ENCODE measurements at regions of chr1 and their contacts with region 1.

Region 1: GRCh38 chr1:18926315-18927081 is 24.1 kb upstream of the ALDH4A1 start:
- DNase-seq: peak; percentile 46 to 90 (median 75)
- ATAC-seq: peak; percentile 79
- H3K4me3 Mint-ChIP-seq: peak overlapping the region; percentile 69 to 93 (median 85)
- H3K27ac Mint-ChIP-seq: peak overlapping the region; percentile 85 to 98 (median 96)
- H3K4me1 Mint-ChIP-seq: peaks cover 34 to 93% (median 86%) of the 10 kb centered on the region in 4 donors
- H3K27me3 Mint-ChIP-seq: no peaks in the 10 kb centered on the region

Region 2: DNA sequence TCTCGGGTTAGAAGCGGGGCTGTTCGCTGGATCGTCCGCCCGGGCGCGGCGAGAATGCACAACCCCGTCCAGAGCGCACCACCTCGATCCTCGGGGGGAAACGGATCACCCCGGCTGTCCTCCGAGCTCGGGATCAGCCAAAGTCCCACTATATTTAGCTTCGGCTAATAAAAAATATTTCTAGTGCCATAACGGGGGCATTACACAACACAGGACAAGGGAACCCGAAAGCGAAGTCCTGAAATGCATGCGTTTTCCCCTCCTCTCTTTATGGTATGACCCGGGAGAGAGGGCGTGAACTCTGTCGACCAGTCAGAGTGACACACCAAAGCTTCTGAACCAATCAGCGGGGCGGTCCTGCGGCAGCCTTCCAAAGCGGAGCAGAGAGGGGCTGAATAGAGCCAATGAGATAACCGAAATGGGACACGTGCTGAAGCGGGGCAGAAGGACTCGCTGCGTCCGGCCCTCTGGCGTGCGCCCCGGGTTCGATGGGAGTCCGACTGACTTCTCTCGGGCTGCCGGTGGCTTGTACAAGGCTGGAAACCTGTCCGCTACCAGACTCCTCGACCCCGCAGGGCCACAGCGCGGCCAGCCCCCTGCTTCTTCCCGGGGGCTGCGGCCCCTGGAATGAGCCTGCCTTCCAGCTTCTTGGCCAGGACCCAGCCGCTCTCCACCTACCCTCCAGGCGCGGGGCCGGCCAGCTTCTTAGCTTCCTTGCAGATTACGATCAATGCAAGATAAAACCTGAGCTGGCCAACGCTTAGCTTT is 23.8 kb before region 1 on chr1 and contains the start of gene ALDH4A1:
- POLR2A ChIA-PET with region 1: interaction called, 11 read pairs
- DNase-seq: peak; percentile 77 to 97 (median 92)
- ATAC-seq: peak; percentile 96 to 98
- H3K4me3 Mint-ChIP-seq: peak within 1 kb of the TSS; percentile 88 to 95 (median 92)
- H3K27ac Mint-ChIP-seq: peak within 1 kb of the TSS; percentile 82 to 99 (median 98)
- H3K4me1 Mint-ChIP-seq: peaks cover 15 to 58% (median 37%) of the 10 kb centered on the region in 4 donors
- H3K27me3 Mint-ChIP-seq: no peaks in the 10 kb centered on the region
- polyA plus RNA-seq, gene ALDH4A1: 0.31 to 2.0 (median 0.39) TPM

Region 3: GRCh38 chr1:18913065-18913835 is 13.2 kb before region 1 on chr1:
- POLR2A ChIA-PET with region 1: interaction called, 28 read pairs
- DNase-seq: peak; percentile 49 to 84 (median 67)
- ATAC-seq: peak; percentile 82 to 87
- H3K4me3 Mint-ChIP-seq: no peak overlapping the region
- H3K27ac Mint-ChIP-seq: peak overlapping the region in 5 of 10 donors; percentile 48 to 91 (median 78)
- H3K4me1 Mint-ChIP-seq: peaks cover 9 to 18% (median 14%) of the 10 kb centered on the region in 4 donors
- H3K27me3 Mint-ChIP-seq: no peaks in the 10 kb centered on the region

Region 4: DNA sequence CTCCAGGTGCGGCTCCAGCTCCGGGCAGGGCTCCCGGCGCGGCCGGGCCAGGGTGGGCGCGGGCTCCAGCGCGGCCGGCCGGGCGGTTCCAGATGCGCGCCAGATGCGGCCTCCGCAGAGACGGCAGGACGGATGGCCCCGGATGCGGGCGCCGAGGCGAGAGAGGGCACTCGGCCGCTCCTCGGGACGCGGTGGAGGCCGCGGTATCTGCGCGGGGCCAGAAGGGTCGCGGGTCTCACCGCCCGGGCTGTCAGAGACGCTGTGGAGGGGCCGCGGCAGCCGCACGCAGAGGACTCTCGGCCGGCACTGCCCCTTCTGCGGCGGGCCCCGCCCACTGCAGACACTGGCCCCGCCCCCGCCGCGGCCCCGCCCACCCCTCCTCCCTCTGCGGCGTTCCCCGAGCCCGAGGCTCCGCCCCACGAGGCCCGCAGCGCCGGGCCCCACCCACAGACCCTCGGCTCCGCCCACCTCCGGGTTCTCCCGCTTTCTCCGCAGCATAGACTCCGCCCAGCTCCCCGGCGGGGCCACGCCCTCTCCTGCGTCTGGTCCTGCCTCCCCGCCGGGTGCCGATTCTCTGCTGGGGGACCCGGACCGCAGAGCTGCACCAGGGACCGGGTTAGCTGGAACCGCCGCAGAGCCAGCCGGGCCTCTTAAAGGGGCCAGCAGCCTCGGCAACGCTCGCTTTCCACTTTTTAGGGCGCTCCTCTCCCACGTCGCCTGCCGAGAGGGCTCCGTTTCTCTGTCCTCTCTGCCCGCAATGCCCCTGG is 30.1 kb after region 1 on chr1 and contains the start of gene IFFO2:
- POLR2A ChIA-PET with region 1: interaction called, 430 read pairs
- DNase-seq: peak; percentile 95 to 99 (median 98)
- ATAC-seq: peak; percentile 64 to 71
- H3K4me3 Mint-ChIP-seq: peak within 1 kb of the TSS; percentile 80 to 95 (median 90)
- H3K27ac Mint-ChIP-seq: peak within 1 kb of the TSS; percentile 77 to 100 (median 96)
- H3K4me1 Mint-ChIP-seq: peaks cover 36 to 63% (median 54%) of the 10 kb centered on the region in 4 donors
- H3K27me3 Mint-ChIP-seq: no peaks in the 10 kb centered on the region
- polyA plus RNA-seq, gene IFFO2: 1.6 to 4.4 (median 4.4) TPM

Region 5: GRCh38 chr1:19074902-19075721 is 148.6 kb after region 1 on chr1:
- POLR2A ChIA-PET with region 1: interaction called, 19 read pairs
- DNase-seq: peak in 2 of 10 donors; percentile 19 to 35
- ATAC-seq: peak; percentile 16 to 29
- H3K4me3 Mint-ChIP-seq: peak overlapping the region; percentile 56 to 83 (median 68)
- H3K27ac Mint-ChIP-seq: peak overlapping the region in 9 of 10 donors; percentile 60 to 94 (median 75)
- H3K4me1 Mint-ChIP-seq: peaks cover 15 to 49% (median 44%) of the 10 kb centered on the region in 4 donors
- H3K27me3 Mint-ChIP-seq: peaks cover 0 to 10% (median 0%) of the 10 kb centered on the region in 5 donors

Measured in naive thymus-derived CD8-positive, alpha-beta T cell (primary cell).